ENCODE measurements at regions of chr17 and their contacts with region 1.

Region 1: GRCh38 chr17:9158544-9159452 is 137.5 kb downstream of the NTN1 start:
- DNase-seq: peak; percentile 75
- H3K4me3 ChIP-seq: no peak overlapping the region
- H3K27ac ChIP-seq: peak overlapping the region in 3 of 4 donors; percentile 23 to 58 (median 32)
- H3K4me1 ChIP-seq: peaks cover 0 to 17% (median 9%) of the 10 kb centered on the region in 4 donors
- H3K27me3 ChIP-seq: no peaks in the 10 kb centered on the region
- CTCF ChIP-seq: no peak
- EP300 ChIP-seq: peak in 2 of 4 donors; percentile 15 to 68
- POLR2A ChIP-seq: no peak

Region 2: DNA sequence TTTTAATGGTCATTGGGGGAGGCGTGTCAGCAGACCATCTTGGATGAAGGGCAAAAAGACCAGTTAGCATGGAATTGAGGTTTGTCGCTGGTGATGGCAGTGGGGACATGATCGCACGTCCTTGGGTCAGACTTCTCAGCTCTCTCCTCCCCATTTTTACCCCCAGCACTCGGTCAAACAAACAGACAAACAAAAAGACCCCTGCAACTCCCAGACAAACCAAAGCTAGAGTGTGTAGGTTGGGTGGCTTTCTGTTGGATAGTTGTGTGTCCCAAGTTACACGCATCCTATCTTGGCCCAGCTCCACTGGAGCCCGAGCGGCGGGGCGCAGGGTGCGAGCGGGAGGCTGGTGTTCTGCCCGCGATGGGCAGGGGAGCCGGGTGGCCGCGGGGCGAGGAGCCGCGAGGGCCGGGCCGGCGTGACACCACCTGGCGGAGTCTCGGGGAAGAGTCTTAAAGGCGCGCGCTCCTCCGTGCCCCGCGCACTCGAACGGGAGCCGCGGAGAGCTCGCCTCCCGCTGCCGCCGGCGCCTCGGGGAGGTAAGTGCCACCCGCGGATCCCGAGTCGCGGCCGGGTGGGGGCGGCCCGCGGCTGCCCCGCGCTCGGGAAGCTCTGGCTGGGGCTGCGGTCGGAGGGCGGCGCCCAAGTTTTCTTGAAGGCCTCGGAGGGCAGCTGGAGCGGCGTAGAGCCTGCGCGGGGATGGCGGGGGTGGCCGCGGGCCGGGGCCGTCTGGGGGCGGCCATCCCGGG is 156.0 kb before region 1 on chr17:
- intact Hi-C with region 1: loop called (anchors 5 kb)
- DNase-seq: no peak
- H3K4me3 ChIP-seq: peak overlapping the region; percentile 28 to 70 (median 56)
- H3K27ac ChIP-seq: peak overlapping the region; percentile 51 to 74 (median 58)
- H3K4me1 ChIP-seq: peaks cover 0 to 48% (median 26%) of the 10 kb centered on the region in 4 donors
- H3K27me3 ChIP-seq: peaks cover 0 to 13% (median 8%) of the 10 kb centered on the region in 3 donors
- CTCF ChIP-seq: peak in 2 of 4 experiments; percentile 24 to 48
- EP300 ChIP-seq: no peak
- POLR2A ChIP-seq: no peak

Region 3: DNA sequence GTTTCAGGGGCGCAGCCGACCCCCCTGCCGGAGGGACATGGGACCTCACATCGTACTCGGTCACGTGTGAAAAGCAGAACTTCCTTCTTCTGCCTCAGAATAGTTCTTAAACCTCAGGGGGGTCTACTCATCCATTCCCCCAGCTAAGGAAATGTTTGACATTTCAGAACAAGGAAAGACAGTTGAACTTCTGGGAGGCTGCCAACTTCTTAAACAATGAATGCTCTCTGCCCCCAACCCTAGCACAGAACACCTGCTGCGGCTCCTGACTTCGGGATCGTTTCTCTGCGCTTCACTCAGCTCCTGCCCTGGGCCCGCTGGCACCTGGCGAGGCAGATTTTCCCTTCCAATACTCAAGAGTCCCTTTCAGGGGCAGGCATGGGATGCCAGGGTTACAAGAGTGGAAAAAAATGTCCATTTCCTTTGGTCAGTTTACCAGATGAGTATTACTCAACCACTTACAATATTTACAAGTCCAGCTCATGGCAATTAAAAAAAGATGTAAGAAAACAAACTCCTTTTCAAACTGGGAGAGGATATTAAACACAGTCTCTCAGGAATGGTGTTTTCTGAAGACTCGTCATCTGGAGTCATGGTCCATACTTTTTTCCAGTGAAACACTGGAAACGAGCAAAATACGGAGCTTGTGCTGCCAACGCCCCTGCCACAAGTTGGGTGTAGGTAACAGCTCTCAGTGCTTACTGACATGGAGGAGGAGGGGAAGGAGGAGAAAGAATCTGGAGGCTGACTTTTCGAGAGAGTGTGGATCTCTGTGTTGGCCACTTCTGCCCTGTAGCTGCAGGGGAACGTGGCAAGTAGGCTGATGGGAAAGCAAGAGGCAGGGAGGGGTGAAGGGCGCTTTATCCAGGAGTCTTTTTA is 98.2 kb after region 1 on chr17:
- intact Hi-C with region 1: no loop called
- DNase-seq: no peak
- H3K4me3 ChIP-seq: no peak overlapping the region
- H3K27ac ChIP-seq: peak overlapping the region in 2 of 4 donors; percentile 3 to 56
- H3K4me1 ChIP-seq: peaks cover 0 to 9% (median 3%) of the 10 kb centered on the region in 4 donors
- H3K27me3 ChIP-seq: no peaks in the 10 kb centered on the region
- CTCF ChIP-seq: no peak
- EP300 ChIP-seq: no peak
- POLR2A ChIP-seq: no peak

Region 4: GRCh38 chr17:9536061-9536460 is 377.3 kb after region 1 on chr17:
- intact Hi-C with region 1: no loop called
- DNase-seq: no peak
- H3K4me3 ChIP-seq: no peak overlapping the region
- H3K27ac ChIP-seq: no peak overlapping the region
- H3K4me1 ChIP-seq: no peaks in the 10 kb centered on the region
- H3K27me3 ChIP-seq: no peaks in the 10 kb centered on the region
- CTCF ChIP-seq: no peak
- EP300 ChIP-seq: no peak
- POLR2A ChIP-seq: no peak

Measured in sigmoid colon (tissue), 7 donors.